Activated naive CD8-positive, alpha-beta T cell treated with anti-CD3 and anti-CD28 coated beads, Interleukin-2, amount 10 ng/mL, durations not matched to agents 7 days and 5 days (primary cell): ENCODE measurements at regions of chr10 and their contacts with region 1.

Region 1: GRCh38 chr10:110843031-110843430 is 28.7 kb upstream of the PDCD4 start:
- DNase-seq: no peak
- ATAC-seq: peak; percentile 88
- H3K4me3 Mint-ChIP-seq: peak overlapping the region; percentile 42
- H3K27ac Mint-ChIP-seq: peak overlapping the region; percentile 77
- H3K4me1 Mint-ChIP-seq: peaks cover 36% of the 10 kb centered on the region
- H3K27me3 Mint-ChIP-seq: no peaks in the 10 kb centered on the region

Region 2: GRCh38 chr10:110857265-110858158 is 14.5 kb after region 1 on chr10:
- POLR2A ChIA-PET with region 1: interaction called, 21 read pairs
- DNase-seq: no peak
- ATAC-seq: no peak
- H3K4me3 Mint-ChIP-seq: peak overlapping the region; percentile 39
- H3K27ac Mint-ChIP-seq: peak overlapping the region; percentile 86
- H3K4me1 Mint-ChIP-seq: peaks cover 67% of the 10 kb centered on the region
- H3K27me3 Mint-ChIP-seq: no peaks in the 10 kb centered on the region